ENCODE measurements at regions of chr5 and their contacts with region 1.

Region 1: DNA sequence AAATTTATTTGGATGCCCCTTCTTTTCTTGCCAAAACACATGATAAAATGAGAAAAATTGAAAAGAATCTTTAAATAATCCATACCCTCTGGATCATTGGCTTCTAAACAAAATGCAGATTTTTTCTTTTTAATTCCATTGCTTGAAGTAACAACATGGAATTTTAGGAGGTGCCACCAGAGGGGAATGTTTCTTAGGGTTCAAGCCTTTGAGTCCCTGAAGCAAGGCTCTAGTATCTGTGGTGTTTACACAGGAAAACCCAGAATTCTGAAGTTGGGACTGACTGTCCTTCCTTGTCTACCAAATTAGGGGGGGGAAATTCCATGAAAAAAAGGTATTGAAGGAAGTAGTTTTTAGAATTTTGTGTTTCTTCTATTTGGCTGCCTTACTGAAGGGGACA is 69.4 kb downstream of the LMNB1 start:
- DNase-seq: no peak
- H3K4me3 ChIP-seq: no peak overlapping the region
- H3K27ac ChIP-seq: no peak overlapping the region
- H3K4me1 ChIP-seq: peaks cover 4 to 36% of the 10 kb centered on the region in 2 donors
- H3K27me3 ChIP-seq: no peaks in the 10 kb centered on the region
- CTCF ChIP-seq: peak in 1 of 6 experiments; percentile 18
- POLR2A ChIP-seq: no peak

Region 2: GRCh38 chr5:127216898-127217675 is 370.7 kb after region 1 on chr5:
- intact Hi-C with region 1: loop called in 1 of 2 experiments (anchors 10 kb)
- DNase-seq: no peak
- H3K4me3 ChIP-seq: no peak overlapping the region
- H3K27ac ChIP-seq: no peak overlapping the region
- H3K4me1 ChIP-seq: no peaks in the 10 kb centered on the region
- H3K27me3 ChIP-seq: no peaks in the 10 kb centered on the region
- CTCF ChIP-seq: no peak
- POLR2A ChIP-seq: no peak